K562 (cell line): ENCODE measurements at regions of chr11 and their contacts with region 1.

Region 1: DNA sequence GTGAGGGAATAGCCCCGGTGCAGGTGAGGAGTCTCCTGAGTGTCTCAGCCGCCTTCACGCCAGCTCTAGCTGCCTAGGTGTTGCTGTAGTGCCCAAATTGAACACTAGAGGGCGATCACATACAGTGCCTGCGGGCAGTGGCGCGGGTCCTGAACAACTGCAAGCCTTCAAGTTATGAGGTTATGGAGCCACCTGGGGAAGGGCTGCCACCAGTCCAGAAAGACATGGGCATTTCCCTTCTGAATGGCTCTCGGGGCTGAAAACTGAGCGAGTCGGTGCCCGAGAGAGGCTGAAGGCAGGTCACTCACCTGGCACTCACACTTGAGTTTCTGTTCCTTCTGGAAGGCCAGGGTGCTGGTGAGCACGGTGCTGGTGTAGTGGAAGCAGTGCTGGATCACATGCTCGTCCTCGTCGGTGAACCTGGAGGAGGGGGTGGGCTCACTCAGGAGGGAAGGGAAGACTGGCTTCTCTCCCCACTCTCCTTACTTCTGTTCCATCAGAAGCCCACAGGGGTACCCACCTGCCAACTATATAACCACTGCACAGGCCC is 88.4 kb downstream of the PDE2A start:
- DNase-seq: peak; percentile 80 to 85 (median 81)
- ATAC-seq: peak; percentile 90
- H3K4me3 ChIP-seq: no peak overlapping the region
- H3K27ac ChIP-seq: no peak overlapping the region
- H3K4me1 ChIP-seq: peaks cover 0 to 21% of the 10 kb centered on the region in 2 experiments; a peak in 2 of 5 replicates
- H3K27me3 ChIP-seq: peaks cover 11 to 67% of the 10 kb centered on the region in 2 experiments; a peak in 3 of 5 replicates
- CTCF ChIP-seq: peak; percentile 85 to 92 (median 86)
- EP300 ChIP-seq: no peak
- POLR2A ChIP-seq: no peak
- RAD21 ChIP-seq: peak; percentile 65 to 91

Region 2: GRCh38 chr11:72642884-72643511 is 57.2 kb after region 1 on chr11:
- CTCF ChIA-PET with region 1: interaction called, 14 read pairs
- POLR2A ChIA-PET with region 1: no interaction called
- in situ Hi-C with region 1: no loop called
- intact Hi-C with region 1: loop called (anchors 1 kb)
- DNase-seq: peak; percentile 79 to 85 (median 83)
- ATAC-seq: peak; percentile 92
- H3K4me3 ChIP-seq: peak overlapping the region; percentile 38
- H3K27ac ChIP-seq: no peak overlapping the region; the same call in 2 of the 3 replicates
- H3K4me1 ChIP-seq: peaks cover 0 to 20% of the 10 kb centered on the region in 2 experiments; a peak in 3 of 5 replicates
- H3K27me3 ChIP-seq: peaks cover 29 to 41% of the 10 kb centered on the region in 2 experiments
- CTCF ChIP-seq: peak; percentile 87 to 95 (median 89)
- EP300 ChIP-seq: no peak
- POLR2A ChIP-seq: no peak
- RAD21 ChIP-seq: peak; percentile 85 to 96

Region 3: DNA sequence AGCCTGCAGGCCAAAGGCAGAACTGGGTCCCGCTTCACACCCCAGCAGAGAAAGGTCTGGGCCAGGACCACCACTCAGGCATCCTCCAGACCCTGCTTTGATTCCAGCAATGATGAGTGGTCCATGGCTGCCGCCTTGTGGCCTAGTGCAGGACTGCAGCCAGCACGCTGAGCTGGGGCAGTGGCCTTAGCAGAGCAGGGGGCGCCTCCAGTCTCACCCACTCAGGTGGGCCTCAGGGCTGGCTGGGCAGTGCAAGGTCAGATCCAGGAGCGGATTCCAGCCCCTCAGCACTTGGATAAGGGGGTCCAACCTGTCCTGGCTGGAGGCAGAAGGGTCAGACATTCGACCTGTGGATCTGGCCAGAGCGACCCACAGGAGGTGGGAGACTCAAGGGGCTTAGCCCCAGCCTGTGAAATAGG is 98.0 kb after region 1 on chr11:
- CTCF ChIA-PET with region 1: interaction called, 9 read pairs
- POLR2A ChIA-PET with region 1: no interaction called
- in situ Hi-C with region 1: loop called (anchors 5 kb)
- intact Hi-C with region 1: loop called (anchors 1 kb)
- DNase-seq: peak; percentile 74 to 80 (median 76)
- ATAC-seq: peak; percentile 88
- H3K4me3 ChIP-seq: no peak overlapping the region
- H3K27ac ChIP-seq: no peak overlapping the region
- H3K4me1 ChIP-seq: peaks cover 3 to 35% of the 10 kb centered on the region in 2 experiments; a peak in 4 of 5 replicates
- H3K27me3 ChIP-seq: peaks cover 0 to 10% of the 10 kb centered on the region in 2 experiments; a peak in 2 of 5 replicates
- CTCF ChIP-seq: peak; percentile 87 to 96 (median 93)
- EP300 ChIP-seq: no peak
- POLR2A ChIP-seq: no peak
- RAD21 ChIP-seq: peak; percentile 63 to 83; a peak in 3 of 4 replicates

Region 4: GRCh38 chr11:73177778-73178577 is 592.1 kb after region 1 on chr11:
- CTCF ChIA-PET with region 1: interaction called, 3 read pairs
- POLR2A ChIA-PET with region 1: no interaction called
- in situ Hi-C with region 1: no loop called
- intact Hi-C with region 1: loop called (anchors 5 kb)
- DNase-seq: peak; percentile 68 to 76 (median 70)
- ATAC-seq: peak; percentile 89
- H3K4me3 ChIP-seq: no peak overlapping the region
- H3K27ac ChIP-seq: no peak overlapping the region
- H3K4me1 ChIP-seq: peaks cover 5 to 7% of the 10 kb centered on the region in 2 experiments; a peak in 3 of 5 replicates
- H3K27me3 ChIP-seq: no peaks in the 10 kb centered on the region
- CTCF ChIP-seq: peak; percentile 73 to 83 (median 81)
- EP300 ChIP-seq: no peak
- POLR2A ChIP-seq: no peak
- RAD21 ChIP-seq: peak; percentile 94 to 96